AG04450 (cell line): ENCODE measurements at regions of chr4 and their contacts with region 1.

Region 1: GRCh38 chr4:133146574-133147241 is 2.4 kb upstream of the PCDH10 start:
- DNase-seq: no peak
- H3K4me3 ChIP-seq: peak overlapping the region; percentile 61
- H3K27ac ChIP-seq: no peak overlapping the region
- H3K27me3 ChIP-seq: peaks cover 33% of the 10 kb centered on the region
- CTCF ChIP-seq: peak; percentile 99

Region 2: GRCh38 chr4:133014473-133015135 is 132.1 kb before region 1 on chr4:
- CTCF ChIA-PET with region 1: no interaction called
- POLR2A ChIA-PET with region 1: no interaction called
- DNase-seq: no peak
- H3K4me3 ChIP-seq: no peak overlapping the region
- H3K27ac ChIP-seq: no peak overlapping the region
- H3K27me3 ChIP-seq: no peaks in the 10 kb centered on the region
- CTCF ChIP-seq: no peak

Region 3: GRCh38 chr4:133130171-133130570 is 16.5 kb before region 1 on chr4:
- CTCF ChIA-PET with region 1: interaction called, 15 read pairs
- POLR2A ChIA-PET with region 1: no interaction called
- DNase-seq: no peak
- H3K4me3 ChIP-seq: no peak overlapping the region
- H3K27ac ChIP-seq: no peak overlapping the region
- H3K27me3 ChIP-seq: no peaks in the 10 kb centered on the region
- CTCF ChIP-seq: no peak

Region 4: GRCh38 chr4:133161570-133162381 is 15.1 kb after region 1 on chr4:
- CTCF ChIA-PET with region 1: interaction called, 21 read pairs
- POLR2A ChIA-PET with region 1: no interaction called
- DNase-seq: no peak
- H3K4me3 ChIP-seq: no peak overlapping the region
- H3K27ac ChIP-seq: no peak overlapping the region
- H3K27me3 ChIP-seq: no peaks in the 10 kb centered on the region
- CTCF ChIP-seq: no peak

Region 5: GRCh38 chr4:133208694-133209285 is 62.1 kb after region 1 on chr4:
- CTCF ChIA-PET with region 1: no interaction called
- POLR2A ChIA-PET with region 1: no interaction called
- DNase-seq: no peak
- H3K4me3 ChIP-seq: no peak overlapping the region
- H3K27ac ChIP-seq: no peak overlapping the region
- H3K27me3 ChIP-seq: no peaks in the 10 kb centered on the region
- CTCF ChIP-seq: no peak

Region 6: GRCh38 chr4:133472244-133472643 is 325.5 kb after region 1 on chr4:
- CTCF ChIA-PET with region 1: interaction called, 12 read pairs
- POLR2A ChIA-PET with region 1: no interaction called
- DNase-seq: no peak
- H3K4me3 ChIP-seq: no peak overlapping the region
- H3K27ac ChIP-seq: no peak overlapping the region
- H3K27me3 ChIP-seq: no peaks in the 10 kb centered on the region
- CTCF ChIP-seq: no peak

Region 7: GRCh38 chr4:133483600-133484246 is 337.0 kb after region 1 on chr4:
- CTCF ChIA-PET with region 1: interaction called, 32 read pairs
- POLR2A ChIA-PET with region 1: no interaction called
- DNase-seq: peak; percentile 15
- H3K4me3 ChIP-seq: no peak overlapping the region
- H3K27ac ChIP-seq: no peak overlapping the region
- H3K27me3 ChIP-seq: no peaks in the 10 kb centered on the region
- CTCF ChIP-seq: peak; percentile 59

Region 8: GRCh38 chr4:133839326-133839725 is 692.6 kb after region 1 on chr4:
- CTCF ChIA-PET with region 1: interaction called, 11 read pairs
- POLR2A ChIA-PET with region 1: no interaction called
- DNase-seq: no peak
- H3K4me3 ChIP-seq: no peak overlapping the region
- H3K27ac ChIP-seq: no peak overlapping the region
- H3K27me3 ChIP-seq: no peaks in the 10 kb centered on the region
- CTCF ChIP-seq: peak; percentile 31; the same call in 1 of the 2 replicates